H1 (cell line): ENCODE measurements at regions of chr9 and their contacts with region 1.

Region 1: DNA sequence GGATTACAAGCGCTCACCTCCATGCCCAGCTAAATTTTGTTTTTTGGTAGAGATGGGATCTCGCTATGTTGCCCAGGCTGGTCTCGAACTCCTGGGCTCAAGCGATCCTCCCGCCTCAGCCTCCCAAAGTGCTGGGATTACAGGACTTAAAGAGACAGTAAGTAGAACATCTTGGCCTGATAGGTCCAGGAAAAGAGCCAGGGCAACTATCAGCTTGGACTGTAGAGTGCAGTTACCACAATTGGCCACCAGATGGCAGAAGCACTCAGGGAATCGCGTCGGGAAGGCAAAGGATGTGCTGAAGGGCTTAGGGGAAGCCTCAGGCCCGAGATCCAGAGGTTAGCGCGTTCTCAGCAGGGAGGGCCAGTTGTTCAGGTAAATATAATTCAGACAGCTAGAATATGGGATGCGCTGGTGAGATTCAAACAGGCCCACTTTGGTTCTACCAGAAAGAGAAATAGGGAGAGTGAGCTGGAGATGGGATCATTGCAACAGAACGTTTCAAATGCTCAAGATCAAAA is 21.5 kb downstream of the C9orf57 start:
- DNase-seq: peak; percentile 77 to 92
- H3K4me3 ChIP-seq: no peak overlapping the region
- H3K27ac ChIP-seq: no peak overlapping the region
- H3K4me1 ChIP-seq: no peaks in the 10 kb centered on the region
- H3K27me3 ChIP-seq: no peaks in the 10 kb centered on the region
- CTCF ChIP-seq: peak; percentile 93 to 99 (median 95)
- EP300 ChIP-seq: no peak
- POLR2A ChIP-seq: no peak
- RAD21 ChIP-seq: peak; percentile 100

Region 2: DNA sequence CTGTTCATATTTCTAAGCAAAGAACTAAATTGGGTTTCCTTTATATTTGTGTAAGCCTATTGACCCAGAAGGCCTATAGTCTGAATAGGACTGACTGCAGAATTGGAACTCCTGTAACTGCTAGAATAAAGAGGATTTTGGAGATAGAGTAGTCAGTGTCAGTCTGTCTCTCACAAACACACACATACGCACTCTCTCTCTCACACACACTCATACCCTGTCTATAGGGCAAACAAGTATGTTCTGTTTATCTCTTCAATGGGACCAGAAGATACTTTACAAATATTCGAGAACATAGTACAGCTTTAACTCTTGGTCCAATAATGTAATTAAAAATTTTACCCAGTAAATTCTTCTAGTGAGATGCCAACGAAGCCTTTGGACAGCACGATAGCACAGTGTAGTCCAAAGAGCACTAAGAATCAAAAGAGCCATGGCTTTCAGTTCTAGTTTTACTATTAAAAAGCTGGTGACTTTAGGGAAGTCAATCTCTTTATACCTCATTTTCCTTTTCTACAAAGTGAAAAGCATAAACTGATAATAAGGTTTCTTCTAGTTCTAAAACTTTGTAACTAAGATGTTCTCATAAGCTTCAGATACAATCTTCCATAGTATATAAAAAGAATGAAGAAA is 147.3 kb before region 1 on chr9:
- CTCF ChIA-PET with region 1: no interaction called
- POLR2A ChIA-PET with region 1: no interaction called
- DNase-seq: no peak
- H3K4me3 ChIP-seq: no peak overlapping the region
- H3K27ac ChIP-seq: no peak overlapping the region
- H3K4me1 ChIP-seq: peaks cover 0 to 4% (median 0%) of the 10 kb centered on the region in 4 experiments; a peak in 1 of 7 replicates
- H3K27me3 ChIP-seq: no peaks in the 10 kb centered on the region
- CTCF ChIP-seq: no peak
- EP300 ChIP-seq: no peak
- POLR2A ChIP-seq: no peak
- RAD21 ChIP-seq: no peak

Region 3: DNA sequence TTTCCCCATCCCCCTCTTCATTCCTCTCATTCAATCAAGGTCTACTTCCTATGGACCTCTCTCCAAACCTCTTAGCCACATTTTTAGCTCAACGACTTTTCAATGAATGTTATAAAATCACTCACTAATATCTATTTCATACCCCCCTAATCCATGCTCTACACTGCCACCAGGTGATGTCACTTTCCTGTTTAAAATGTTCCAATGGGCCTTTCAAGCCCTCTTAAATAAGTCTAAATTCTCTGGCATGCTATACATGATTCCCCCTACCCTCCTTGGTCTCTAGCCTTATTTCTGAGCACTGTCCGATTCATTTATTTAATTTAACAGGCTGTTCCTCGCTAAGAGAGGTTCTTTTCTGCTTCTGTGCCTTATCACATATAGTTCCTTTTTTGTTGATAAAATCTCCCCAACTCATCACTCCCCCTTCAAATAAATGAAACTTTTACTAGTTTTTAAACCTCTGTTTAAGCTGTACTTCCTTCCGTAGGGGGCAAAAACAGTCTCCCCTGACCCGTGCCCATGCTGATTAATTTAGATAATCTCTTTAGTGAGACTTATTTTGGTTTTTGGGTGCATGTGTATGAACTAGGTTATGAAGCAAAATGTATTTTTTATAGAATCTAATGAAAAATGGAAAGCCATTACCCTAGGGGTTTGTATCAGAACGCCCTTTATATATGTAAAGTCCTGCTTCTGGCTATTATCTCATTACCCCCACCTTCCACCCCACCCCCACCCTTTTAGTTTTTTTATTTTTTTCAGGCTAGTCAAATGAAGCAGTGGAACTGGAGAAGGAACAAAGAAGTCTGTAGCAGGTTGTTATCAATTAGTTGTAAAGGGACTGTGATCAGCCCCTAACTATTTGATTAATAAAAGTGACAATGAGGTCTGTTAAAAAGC is 137.0 kb before region 1 on chr9:
- CTCF ChIA-PET with region 1: no interaction called
- POLR2A ChIA-PET with region 1: no interaction called
- DNase-seq: no peak
- H3K4me3 ChIP-seq: peak overlapping the region in 1 of 4 experiments; percentile 39; a peak in 1 of 8 replicates
- H3K27ac ChIP-seq: no peak overlapping the region
- H3K4me1 ChIP-seq: peaks cover 0 to 20% (median 9%) of the 10 kb centered on the region in 4 experiments; a peak in 5 of 7 replicates
- H3K27me3 ChIP-seq: no peaks in the 10 kb centered on the region
- CTCF ChIP-seq: no peak
- EP300 ChIP-seq: no peak
- POLR2A ChIP-seq: no peak
- RAD21 ChIP-seq: no peak

Region 4: DNA sequence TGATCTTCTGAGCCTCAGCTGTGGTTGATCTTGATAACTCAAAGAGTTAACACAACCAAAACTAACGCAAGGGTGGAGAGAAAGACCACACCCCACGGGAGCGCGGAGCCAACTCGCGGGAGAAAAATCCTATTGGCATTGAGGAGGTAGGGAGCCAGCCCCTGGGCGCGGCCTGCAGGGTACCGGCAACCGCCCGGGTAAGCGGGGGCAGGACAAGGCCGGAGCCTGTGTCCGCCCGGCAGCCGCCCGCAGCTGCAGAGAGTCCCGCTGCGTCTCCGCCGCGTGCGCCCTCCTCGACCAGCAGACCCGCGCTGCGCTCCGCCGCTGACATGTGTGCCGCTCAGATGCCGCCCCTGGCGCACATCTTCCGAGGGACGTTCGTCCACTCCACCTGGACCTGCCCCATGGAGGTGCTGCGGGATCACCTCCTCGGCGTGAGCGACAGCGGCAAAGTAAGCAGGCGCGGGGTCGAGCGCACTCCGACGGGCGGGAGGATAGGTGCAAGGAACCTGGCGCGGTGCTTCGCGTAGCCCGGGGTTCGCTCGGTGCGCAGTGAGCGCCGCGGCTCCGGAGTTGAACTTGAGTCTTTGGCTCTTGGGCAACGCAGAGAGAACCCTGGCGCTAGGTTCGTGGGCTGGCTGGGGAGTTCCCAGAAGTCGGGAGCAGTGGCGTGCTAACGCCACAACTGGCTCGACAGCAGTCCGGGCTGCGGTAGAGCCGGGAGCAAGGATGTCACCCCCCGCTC is 110.5 kb after region 1 on chr9 and contains the start of gene GDA:
- CTCF ChIA-PET with region 1: interaction called, 11 read pairs
- POLR2A ChIA-PET with region 1: interaction called, 3 read pairs
- DNase-seq: peak; percentile 25 to 76
- H3K4me3 ChIP-seq: peak within 1 kb of the TSS; percentile 22 to 63 (median 47)
- H3K27ac ChIP-seq: no peak within 1 kb of the TSS
- H3K4me1 ChIP-seq: peaks cover 0 to 9% (median 2%) of the 10 kb centered on the region in 4 experiments; a peak in 4 of 7 replicates
- H3K27me3 ChIP-seq: peaks cover 14 to 31% (median 27%) of the 10 kb centered on the region in 4 experiments
- CTCF ChIP-seq: no peak
- EP300 ChIP-seq: no peak
- POLR2A ChIP-seq: no peak
- RAD21 ChIP-seq: peak in 1 of 2 experiments; percentile 11; a peak in 1 of 4 replicates
- total RNA-seq, gene GDA: 3.0 TPM in 2 replicates

Region 5: DNA sequence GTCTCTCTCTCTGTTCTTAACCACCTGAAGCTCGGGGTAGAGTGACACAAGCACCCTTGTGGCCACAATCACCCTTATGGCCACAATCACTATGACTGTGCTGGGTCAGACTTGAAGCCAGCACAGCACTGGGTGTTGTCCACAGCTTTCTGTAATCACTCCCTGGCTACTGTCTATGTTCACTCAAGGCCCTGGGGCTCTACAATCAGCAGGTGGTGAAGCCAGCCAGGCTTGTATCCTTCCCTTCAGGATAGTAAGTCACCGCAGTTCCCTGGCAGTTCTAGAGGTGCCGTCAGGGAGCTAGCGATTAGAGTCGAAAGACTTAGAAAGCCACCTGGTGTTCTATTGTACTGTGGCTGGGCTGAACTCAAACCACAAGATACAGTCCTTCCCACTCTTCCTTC is 154.5 kb after region 1 on chr9:
- CTCF ChIA-PET with region 1: interaction called, 11 read pairs
- POLR2A ChIA-PET with region 1: no interaction called
- DNase-seq: no peak
- H3K4me3 ChIP-seq: no peak overlapping the region
- H3K27ac ChIP-seq: no peak overlapping the region
- H3K4me1 ChIP-seq: 0 out of 7 replicates have a peak, but pooled peaks cover 0 to 1% (median 0%) of the 10 kb centered on the region in 4 experiments
- H3K27me3 ChIP-seq: no peaks in the 10 kb centered on the region
- CTCF ChIP-seq: no peak
- EP300 ChIP-seq: no peak
- POLR2A ChIP-seq: no peak
- RAD21 ChIP-seq: no peak

Region 6: DNA sequence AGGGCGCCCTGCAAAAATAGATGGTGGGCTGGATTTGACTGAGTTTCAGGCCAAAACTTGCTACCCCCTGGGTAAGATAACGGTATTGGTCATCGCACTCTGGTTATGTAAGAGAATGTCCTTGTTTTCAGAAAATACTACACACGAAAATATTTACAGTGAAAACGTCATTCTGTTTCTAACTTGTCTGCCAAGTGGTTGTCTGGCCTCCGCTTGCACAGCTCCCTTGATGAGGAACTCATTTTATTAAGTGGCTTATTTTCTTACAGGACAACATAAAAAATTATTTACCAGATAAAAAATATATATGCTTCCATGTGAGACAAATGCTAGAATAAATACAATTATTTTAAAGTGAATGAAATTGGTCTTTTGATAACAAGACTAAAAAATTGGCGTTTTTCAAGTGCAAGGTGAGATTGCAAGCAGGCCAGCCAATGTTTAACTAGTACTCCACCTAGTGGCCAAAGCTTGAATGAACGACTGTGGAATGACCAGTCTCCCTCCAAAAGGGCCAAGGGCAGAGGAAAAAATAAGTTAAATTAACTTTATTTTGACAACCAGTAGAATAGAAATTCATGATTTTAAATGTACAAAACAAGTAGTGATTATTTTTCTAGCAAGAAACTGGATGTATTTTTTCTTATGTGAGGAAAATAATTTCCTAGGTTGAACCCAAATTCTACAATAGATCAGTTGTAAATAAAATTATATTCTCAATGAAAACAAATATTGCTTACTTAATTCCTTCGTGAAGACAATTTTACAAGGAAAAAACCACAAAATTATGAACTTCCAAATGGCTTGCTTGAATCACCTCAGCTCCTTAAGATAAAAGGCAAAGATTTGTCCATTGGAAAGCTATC is 232.9 kb after region 1 on chr9:
- CTCF ChIA-PET with region 1: interaction called, 67 read pairs
- POLR2A ChIA-PET with region 1: no interaction called
- DNase-seq: peak in 1 of 2 experiments; percentile 67
- H3K4me3 ChIP-seq: no peak overlapping the region
- H3K27ac ChIP-seq: no peak overlapping the region
- H3K4me1 ChIP-seq: no peaks in the 10 kb centered on the region
- H3K27me3 ChIP-seq: no peaks in the 10 kb centered on the region
- CTCF ChIP-seq: peak; percentile 5 to 77 (median 75)
- EP300 ChIP-seq: no peak
- POLR2A ChIP-seq: no peak
- RAD21 ChIP-seq: peak; percentile 86